Activated CD4-positive, alpha-beta memory T cell treated with anti-CD3 and anti-CD28 coated beads, Interleukin-2, amount 10 ng/mL, durations not matched to agents 7 days and 5 days (primary cell): ENCODE measurements at regions of chr20 and their contacts with region 1.

Region 1: DNA sequence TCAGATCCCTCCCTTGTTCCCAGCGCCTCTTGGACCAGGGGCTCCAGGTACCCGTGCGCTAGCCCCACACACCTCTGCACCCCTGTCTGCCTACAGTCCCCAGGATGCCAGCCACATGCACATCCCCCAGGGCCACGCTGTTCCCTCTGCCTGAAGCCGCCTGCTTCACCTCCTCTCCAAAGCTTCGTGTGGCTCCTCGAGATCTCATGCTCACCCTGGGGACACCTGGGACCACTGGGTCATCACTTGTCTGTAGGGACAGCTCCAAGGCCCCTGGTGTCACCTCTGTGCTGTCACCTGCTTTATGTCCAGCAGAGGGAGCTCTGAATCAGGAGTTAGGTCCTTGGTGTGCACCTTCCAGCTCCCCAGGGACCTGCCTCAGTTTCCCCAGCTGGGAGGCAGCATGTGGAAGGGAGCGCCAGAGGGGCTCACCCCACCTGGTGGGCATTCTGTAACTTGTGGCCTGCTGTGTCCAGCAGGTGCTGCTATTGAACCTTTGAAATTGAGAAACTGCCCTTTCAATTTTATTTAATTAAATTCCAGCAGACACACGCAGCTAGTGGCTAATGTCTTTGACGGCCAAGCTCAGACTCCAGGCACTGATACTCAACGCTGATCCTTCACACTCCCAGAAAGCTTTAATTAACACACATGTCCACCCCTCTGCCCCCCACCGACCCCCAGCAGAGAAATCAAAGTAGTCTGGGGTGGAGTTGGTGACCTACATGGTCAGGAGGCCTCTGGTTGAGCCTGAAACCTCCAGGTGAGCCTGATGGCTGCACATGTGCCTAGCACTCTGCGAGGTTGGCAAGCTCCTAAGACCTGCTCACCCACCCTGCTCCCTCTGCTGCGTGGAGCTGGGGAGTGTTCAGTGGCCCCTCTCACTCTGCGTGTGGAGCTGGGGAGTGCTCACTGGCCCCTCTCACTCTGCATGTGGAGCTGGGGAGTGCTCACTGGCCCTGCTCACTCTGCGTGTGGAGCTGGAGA is 7.6 kb upstream of the YTHDF1 start:
- DNase-seq: peak; percentile 54
- H3K4me3 Mint-ChIP-seq: no peak overlapping the region
- H3K27ac Mint-ChIP-seq: no peak overlapping the region
- H3K4me1 Mint-ChIP-seq: no peaks in the 10 kb centered on the region
- H3K27me3 Mint-ChIP-seq: peaks cover 5% of the 10 kb centered on the region

Region 2: GRCh38 chr20:63151554-63152326 is 71.8 kb before region 1 on chr20:
- CTCF ChIA-PET with region 1: no interaction called
- POLR2A ChIA-PET with region 1: no interaction called
- DNase-seq: no peak
- H3K4me3 Mint-ChIP-seq: no peak overlapping the region
- H3K27ac Mint-ChIP-seq: no peak overlapping the region
- H3K4me1 Mint-ChIP-seq: no peaks in the 10 kb centered on the region
- H3K27me3 Mint-ChIP-seq: peaks cover 10% of the 10 kb centered on the region

Region 3: DNA sequence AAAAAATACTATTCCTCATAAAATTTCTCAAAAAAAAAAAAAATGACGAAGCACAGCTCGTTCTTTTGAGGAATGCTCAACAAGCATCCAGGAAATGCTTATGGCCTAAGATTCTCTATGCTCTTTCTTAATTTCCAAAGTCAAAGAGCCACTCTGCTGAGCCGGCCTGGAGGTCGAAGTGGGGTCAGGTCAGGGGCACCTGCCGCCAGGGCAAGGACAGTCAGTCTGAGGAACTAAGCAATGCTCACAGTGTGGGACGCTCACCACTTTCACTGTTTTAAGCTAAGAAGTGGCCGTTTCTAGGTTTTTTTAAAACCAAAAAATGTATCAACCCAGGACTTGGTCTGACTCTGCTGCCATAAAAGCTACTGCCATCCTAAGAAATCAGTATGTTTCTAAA is 24.9 kb before region 1 on chr20:
- CTCF ChIA-PET with region 1: interaction called, 13 read pairs
- POLR2A ChIA-PET with region 1: no interaction called
- DNase-seq: no peak
- H3K4me3 Mint-ChIP-seq: no peak overlapping the region
- H3K27ac Mint-ChIP-seq: no peak overlapping the region
- H3K4me1 Mint-ChIP-seq: peaks cover 11% of the 10 kb centered on the region
- H3K27me3 Mint-ChIP-seq: no peaks in the 10 kb centered on the region

Region 4: GRCh38 chr20:63234739-63235398 is 11.4 kb after region 1 on chr20:
- CTCF ChIA-PET with region 1: interaction called, 14 read pairs
- POLR2A ChIA-PET with region 1: no interaction called
- DNase-seq: no peak
- H3K4me3 Mint-ChIP-seq: no peak overlapping the region
- H3K27ac Mint-ChIP-seq: no peak overlapping the region
- H3K4me1 Mint-ChIP-seq: peaks cover 1% of the 10 kb centered on the region
- H3K27me3 Mint-ChIP-seq: peaks cover 24% of the 10 kb centered on the region

Region 5: GRCh38 chr20:63381807-63382322 is 158.4 kb after region 1 on chr20:
- CTCF ChIA-PET with region 1: interaction called, 23 read pairs
- POLR2A ChIA-PET with region 1: interaction called, 4 read pairs
- DNase-seq: peak; percentile 26
- H3K4me3 Mint-ChIP-seq: no peak overlapping the region
- H3K27ac Mint-ChIP-seq: no peak overlapping the region
- H3K4me1 Mint-ChIP-seq: no peaks in the 10 kb centered on the region
- H3K27me3 Mint-ChIP-seq: no peaks in the 10 kb centered on the region